HEK293T (cell line): ENCODE measurements at regions of chr18 and their contacts with region 1.

Region 1: GRCh38 chr18:50218432-50219197 is 23.7 kb upstream of the MYO5B start:
- DNase-seq: peak; percentile 36

Region 2: DNA sequence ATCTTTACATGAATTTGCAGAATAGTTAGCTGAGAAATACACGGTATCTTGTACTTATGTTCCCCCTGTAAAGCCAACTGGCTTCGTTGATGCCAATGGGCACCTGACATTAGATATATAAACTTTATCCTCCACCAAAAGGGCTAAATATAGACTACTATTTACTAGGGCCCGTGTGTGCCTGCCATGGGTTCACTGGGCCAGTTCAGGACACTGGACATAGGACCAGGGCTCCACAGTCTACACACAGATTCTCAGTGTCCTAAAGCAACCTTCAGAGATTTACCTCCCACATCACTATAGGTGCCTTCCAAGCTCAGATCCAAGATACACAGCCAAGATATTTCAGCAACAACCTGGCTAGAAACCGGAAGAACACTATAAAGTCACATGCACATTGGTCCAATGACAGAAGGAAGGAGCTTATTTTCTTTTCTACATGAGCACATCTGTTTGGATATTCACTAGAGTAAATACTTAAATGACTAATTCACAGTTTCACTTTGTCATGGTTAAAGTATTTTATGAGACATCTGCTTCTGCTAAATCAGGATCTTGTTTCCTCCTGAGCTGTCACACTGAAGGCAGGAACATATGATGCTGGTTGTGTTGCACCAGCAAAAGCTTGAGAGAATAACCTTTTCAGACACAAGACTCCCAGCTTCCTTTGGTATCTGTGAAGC is 118.7 kb before region 1 on chr18:
- CTCF ChIA-PET with region 1: no interaction called
- POLR2A ChIA-PET with region 1: no interaction called
- DNase-seq: no peak

Region 3: DNA sequence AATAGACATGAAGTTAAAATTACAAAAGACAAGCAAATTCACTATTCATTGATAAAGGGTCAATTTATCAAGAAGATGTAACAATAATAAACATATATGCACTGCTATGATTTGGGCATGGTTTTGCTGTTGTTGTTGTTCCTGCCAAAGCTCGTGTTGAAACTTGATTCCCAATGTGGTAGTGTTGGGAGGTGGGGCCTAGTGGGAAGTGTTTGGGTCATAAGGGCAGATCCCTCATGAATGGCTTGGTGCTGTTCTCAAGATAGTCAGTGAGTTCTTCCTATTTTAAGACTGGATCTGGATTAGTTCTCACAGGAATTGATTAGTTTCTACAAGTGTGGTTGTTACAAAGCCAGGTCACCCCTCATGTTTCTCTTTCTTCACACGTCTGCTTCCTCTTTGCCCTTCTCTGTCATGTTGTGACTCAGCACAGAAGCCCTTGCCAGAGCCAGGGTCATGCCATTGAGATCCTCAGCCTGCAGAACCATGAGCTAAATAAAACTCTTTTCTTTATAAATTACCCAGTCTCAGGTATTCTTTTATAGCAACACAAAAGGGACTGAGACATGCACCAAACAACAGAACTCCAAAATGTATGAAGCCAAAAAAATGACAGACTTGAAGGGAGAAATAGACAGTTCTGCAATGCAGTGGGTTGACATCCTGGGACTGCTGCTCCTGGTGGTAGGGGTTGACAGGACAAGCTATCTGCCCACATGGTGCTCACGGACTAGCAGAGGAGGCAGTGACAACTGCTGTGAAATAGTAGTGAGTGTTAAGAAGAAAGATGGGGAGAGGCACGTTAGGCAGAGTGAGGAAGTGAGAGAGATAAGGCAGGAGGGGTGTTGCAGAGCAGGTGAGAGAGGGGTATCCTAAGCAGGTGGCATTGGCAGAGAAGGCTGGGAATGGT is 137.7 kb after region 1 on chr18:
- CTCF ChIA-PET with region 1: interaction called, 17 read pairs
- POLR2A ChIA-PET with region 1: no interaction called
- DNase-seq: no peak

Region 4: DNA sequence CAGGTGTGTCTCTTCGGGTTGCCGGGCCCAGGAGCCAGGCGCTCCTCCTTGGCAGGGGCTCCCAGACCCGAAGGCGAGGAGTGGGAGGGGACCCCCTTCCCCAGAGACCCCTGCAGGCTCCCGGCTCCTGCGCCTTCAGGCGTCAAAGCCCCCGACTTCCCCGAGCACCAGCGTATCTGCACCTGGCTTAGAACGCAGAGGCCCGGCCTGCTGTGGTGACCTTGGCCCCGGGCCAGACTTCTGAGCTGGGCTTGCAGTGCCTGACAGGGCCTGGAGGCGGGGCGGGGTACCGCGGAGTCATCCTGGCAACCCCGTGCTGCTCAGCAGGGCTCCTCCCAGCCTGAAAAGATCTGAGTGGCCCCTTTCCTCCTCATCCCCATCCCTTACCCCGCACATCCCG is 183.3 kb after region 1 on chr18:
- CTCF ChIA-PET with region 1: no interaction called
- POLR2A ChIA-PET with region 1: no interaction called
- DNase-seq: peak; percentile 8